ENCODE measurements at regions of chr20 and their contacts with region 1.

Region 1: DNA sequence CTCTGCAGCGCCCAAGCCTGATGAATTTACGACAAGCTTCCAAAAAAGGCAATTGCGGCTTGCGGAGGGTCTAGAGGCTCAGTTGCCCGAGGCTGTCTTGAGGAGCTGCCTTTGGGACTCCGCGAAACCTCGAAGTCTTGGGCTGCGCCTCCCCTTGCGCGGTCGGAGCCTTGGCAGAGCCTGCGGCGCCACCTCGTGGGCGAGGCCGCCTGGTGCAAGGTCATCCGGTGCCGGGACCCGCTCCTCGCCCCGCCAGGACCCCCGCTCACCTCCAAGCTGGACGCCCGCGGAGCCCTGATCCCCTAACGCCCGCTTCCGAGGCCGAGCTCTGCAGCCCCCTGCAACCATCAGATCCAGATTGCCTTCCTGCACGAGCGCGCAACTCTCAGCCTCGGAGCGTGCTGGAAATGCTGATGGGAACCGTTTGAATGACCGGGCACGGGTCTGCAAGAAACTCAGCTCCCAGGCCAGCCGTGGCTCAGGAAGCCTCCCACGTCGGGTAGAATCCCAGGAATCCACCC is 14.9 kb upstream of the FAM210B start:
- DNase-seq: peak; percentile 56
- H3K4me3 Mint-ChIP-seq: no peak overlapping the region
- H3K27ac Mint-ChIP-seq: no peak overlapping the region
- H3K4me1 Mint-ChIP-seq: peaks cover 10% of the 10 kb centered on the region
- H3K27me3 Mint-ChIP-seq: peaks cover 48% of the 10 kb centered on the region

Region 2: DNA sequence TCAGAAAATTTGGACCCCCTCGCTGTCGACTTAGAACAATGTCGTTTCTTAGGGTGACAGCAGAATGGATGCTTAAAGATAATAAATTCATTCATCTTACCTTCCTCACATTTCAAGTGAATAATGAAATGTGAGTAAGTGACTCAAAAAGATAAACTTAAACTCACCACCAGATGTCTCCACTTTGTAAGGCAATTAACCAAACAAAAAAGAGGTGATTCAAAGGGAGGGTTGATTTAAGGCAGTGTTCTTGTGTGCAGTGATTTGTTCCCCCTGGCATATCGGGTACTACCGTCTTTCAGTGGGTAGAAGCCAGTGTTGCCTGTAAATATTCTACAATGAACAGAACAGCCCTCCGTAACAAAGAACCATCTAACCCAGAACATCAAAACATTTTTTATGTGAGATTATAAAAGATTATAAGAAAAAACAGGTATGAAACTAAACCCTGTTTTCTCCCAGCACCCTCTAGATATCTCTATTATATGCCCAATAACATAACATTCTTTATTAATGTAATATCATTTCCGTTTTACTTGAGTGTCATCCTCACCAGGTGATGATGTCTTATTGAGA is 928.3 kb before region 1 on chr20:
- CTCF ChIA-PET with region 1: no interaction called
- intact Hi-C with region 1: loop called (anchors 10 kb)
- DNase-seq: no peak
- H3K4me3 Mint-ChIP-seq: no peak overlapping the region
- H3K27ac Mint-ChIP-seq: no peak overlapping the region
- H3K4me1 Mint-ChIP-seq: no peaks in the 10 kb centered on the region
- H3K27me3 Mint-ChIP-seq: no peaks in the 10 kb centered on the region

Region 3: GRCh38 chr20:56202493-56203077 is 141.3 kb before region 1 on chr20:
- CTCF ChIA-PET with region 1: no interaction called
- intact Hi-C with region 1: loop called (anchors 5 kb)
- DNase-seq: no peak
- H3K4me3 Mint-ChIP-seq: no peak overlapping the region
- H3K27ac Mint-ChIP-seq: no peak overlapping the region
- H3K4me1 Mint-ChIP-seq: no peaks in the 10 kb centered on the region
- H3K27me3 Mint-ChIP-seq: no peaks in the 10 kb centered on the region